ENCODE measurements at regions of chr6 and their contacts with region 1.

Region 1: GRCh38 chr6:118263921-118264486 is 284.1 kb upstream of the PLN start:
- DNase-seq: peak; percentile 1
- ATAC-seq: no peak
- H3K4me3 ChIP-seq: no peak overlapping the region
- H3K27ac ChIP-seq: no peak overlapping the region
- H3K4me1 ChIP-seq: no peaks in the 10 kb centered on the region
- H3K27me3 ChIP-seq: peaks cover 2% of the 10 kb centered on the region
- CTCF ChIP-seq: 0 out of 2 replicates have a peak, but pooled peaks have one; percentile 18
- POLR2A ChIP-seq: no peak
- RAD21 ChIP-seq: peak; percentile 26; the same call in 1 of the 2 replicates

Region 2: DNA sequence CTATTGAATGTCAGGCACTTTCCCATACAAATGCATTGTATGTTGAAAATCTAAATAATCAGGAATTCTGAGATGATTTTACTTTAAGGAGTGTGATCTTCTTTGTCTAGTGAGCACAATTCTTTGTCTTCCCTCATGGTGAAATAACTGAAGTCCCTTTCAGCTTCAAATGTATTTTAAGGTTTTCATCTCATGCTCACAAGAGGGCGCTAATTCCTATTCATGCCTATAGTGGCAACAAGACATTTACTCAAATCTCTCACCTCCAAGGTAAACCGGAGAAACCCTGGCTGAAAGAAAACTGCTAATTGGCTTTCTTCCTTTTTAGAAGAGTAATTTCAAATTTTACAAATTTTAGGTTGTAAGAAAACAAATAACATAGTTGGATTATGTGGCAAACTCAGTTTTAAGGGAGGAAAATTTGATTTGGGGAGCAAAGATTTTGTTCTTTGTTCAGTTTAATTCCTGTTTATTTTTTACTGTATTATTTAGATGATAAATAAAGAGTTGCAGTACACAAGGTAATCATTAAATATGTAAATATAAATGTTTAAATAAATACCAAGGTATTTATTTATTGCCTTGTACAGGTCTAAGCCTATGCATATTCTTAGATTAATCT is 287.9 kb before region 1 on chr6:
- CTCF ChIA-PET with region 1: interaction called, 3 read pairs
- POLR2A ChIA-PET with region 1: no interaction called
- dilution Hi-C with region 1: no loop called
- in situ Hi-C with region 1: no loop called
- intact Hi-C with region 1: loop called (anchors 2 kb)
- DNase-seq: peak; percentile 44
- ATAC-seq: peak; percentile 37; the same call in 1 of the 2 replicates
- H3K4me3 ChIP-seq: no peak overlapping the region
- H3K27ac ChIP-seq: no peak overlapping the region
- H3K4me1 ChIP-seq: no peaks in the 10 kb centered on the region
- H3K27me3 ChIP-seq: no peaks in the 10 kb centered on the region
- CTCF ChIP-seq: peak; percentile 53
- POLR2A ChIP-seq: no peak
- RAD21 ChIP-seq: peak; percentile 35

Region 3: GRCh38 chr6:119078376-119079282 is 814.6 kb after region 1 on chr6 and contains the start of gene FAM184A:
- CTCF ChIA-PET with region 1: no interaction called
- POLR2A ChIA-PET with region 1: no interaction called
- dilution Hi-C with region 1: no loop called
- in situ Hi-C with region 1: loop called (anchors 25 kb)
- intact Hi-C with region 1: no loop called
- DNase-seq: peak; percentile 48
- ATAC-seq: peak; percentile 87
- H3K4me3 ChIP-seq: peak within 1 kb of the TSS; percentile 48
- H3K27ac ChIP-seq: no peak within 1 kb of the TSS
- H3K4me1 ChIP-seq: no peaks in the 10 kb centered on the region; the same call in 1 of the 2 replicates
- H3K27me3 ChIP-seq: peaks cover 21% of the 10 kb centered on the region
- CTCF ChIP-seq: no peak; the same call in 1 of the 2 replicates
- POLR2A ChIP-seq: no peak
- RAD21 ChIP-seq: no peak
- total RNA-seq, gene FAM184A: not detected in 2 replicates

Region 4: DNA sequence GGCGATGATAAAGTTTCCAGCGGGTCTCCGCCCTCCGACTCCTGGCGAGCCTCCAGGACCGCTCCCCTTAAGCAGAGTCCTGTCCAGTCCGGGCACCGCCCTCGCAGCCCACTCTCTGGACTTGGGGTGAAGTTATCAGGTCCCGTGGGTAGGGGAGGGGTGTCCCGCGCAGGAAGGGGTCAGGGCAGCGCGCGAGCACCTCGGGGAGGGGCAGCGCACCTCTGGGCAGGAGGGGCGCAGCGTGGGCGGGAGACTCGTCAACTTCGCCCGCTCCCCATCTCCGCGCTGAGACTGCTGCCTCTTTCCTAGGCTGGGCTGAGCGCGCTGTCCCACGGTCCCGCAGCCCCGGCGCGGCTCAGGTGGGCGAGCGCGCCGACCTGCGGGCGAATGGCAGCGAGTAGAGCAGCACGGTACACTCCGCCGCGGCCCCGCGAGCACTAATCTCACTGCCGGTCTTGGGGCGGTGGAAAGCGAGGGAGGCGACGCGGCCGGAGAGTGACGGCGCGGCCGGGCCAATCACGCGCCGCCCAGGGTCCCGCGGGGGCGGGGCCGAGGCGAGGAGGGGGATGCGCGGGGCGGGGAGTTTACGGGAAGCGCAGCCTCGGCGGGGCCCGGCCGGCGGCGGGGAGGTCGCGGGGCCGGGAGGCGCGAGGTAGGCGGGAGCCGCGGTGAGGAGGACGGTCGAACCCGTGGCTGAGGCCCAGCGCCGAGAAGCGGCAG is 1085.5 kb after region 1 on chr6 and contains the start of gene MAN1A1:
- CTCF ChIA-PET with region 1: no interaction called
- POLR2A ChIA-PET with region 1: no interaction called
- dilution Hi-C with region 1: no loop called
- in situ Hi-C with region 1: no loop called
- intact Hi-C with region 1: no loop called
- DNase-seq: peak; percentile 66
- ATAC-seq: peak; percentile 94
- H3K4me3 ChIP-seq: peak within 1 kb of the TSS; percentile 98
- H3K27ac ChIP-seq: peak within 1 kb of the TSS; percentile 75
- H3K4me1 ChIP-seq: peaks cover 5% of the 10 kb centered on the region; the same call in 1 of the 2 replicates
- H3K27me3 ChIP-seq: no peaks in the 10 kb centered on the region
- CTCF ChIP-seq: no peak
- POLR2A ChIP-seq: peak; percentile 57; the same call in 1 of the 2 replicates
- RAD21 ChIP-seq: no peak
- total RNA-seq, gene MAN1A1: 5.9 and 11.4 TPM in 2 replicates

Measured in IMR-90 (cell line).